ENCODE measurements at regions of chr5 and their contacts with region 1.

Region 1: GRCh38 chr5:179763215-179763945 is 30.4 kb upstream of the LTC4S start:
- DNase-seq: peak; percentile 84
- H3K4me3 ChIP-seq: no peak overlapping the region
- H3K27ac ChIP-seq: peak overlapping the region; percentile 96
- H3K27me3 ChIP-seq: no peaks in the 10 kb centered on the region
- CTCF ChIP-seq: peak; percentile 90

Region 2: GRCh38 chr5:179732417-179732917 is 30.9 kb before region 1 on chr5 and contains the start of gene MAML1:
- CTCF ChIA-PET with region 1: interaction called, 12 read pairs
- POLR2A ChIA-PET with region 1: interaction called, 8 read pairs
- DNase-seq: peak; percentile 100
- H3K4me3 ChIP-seq: peak within 1 kb of the TSS; percentile 88
- H3K27ac ChIP-seq: peak within 1 kb of the TSS; percentile 83
- H3K27me3 ChIP-seq: no peaks in the 10 kb centered on the region
- CTCF ChIP-seq: no peak
- polyA plus RNA-seq, gene MAML1: 4.9 and 8.8 TPM in 2 replicates

Region 3: GRCh38 chr5:179777909-179778308 is 14.5 kb after region 1 on chr5:
- CTCF ChIA-PET with region 1: interaction called, 15 read pairs
- POLR2A ChIA-PET with region 1: no interaction called
- DNase-seq: no peak
- H3K4me3 ChIP-seq: no peak overlapping the region
- H3K27ac ChIP-seq: no peak overlapping the region
- H3K27me3 ChIP-seq: no peaks in the 10 kb centered on the region
- CTCF ChIP-seq: no peak

Region 4: GRCh38 chr5:179795863-179796833 is 32.8 kb after region 1 on chr5:
- CTCF ChIA-PET with region 1: interaction called, 11 read pairs
- POLR2A ChIA-PET with region 1: no interaction called
- DNase-seq: no peak
- H3K4me3 ChIP-seq: peak overlapping the region; percentile 60
- H3K27ac ChIP-seq: peak overlapping the region; percentile 52
- H3K27me3 ChIP-seq: no peaks in the 10 kb centered on the region
- CTCF ChIP-seq: peak; percentile 51